CD4-positive, alpha-beta memory T cell (primary cell): ENCODE measurements at regions of chr1 and their contacts with region 1.

Region 1: DNA sequence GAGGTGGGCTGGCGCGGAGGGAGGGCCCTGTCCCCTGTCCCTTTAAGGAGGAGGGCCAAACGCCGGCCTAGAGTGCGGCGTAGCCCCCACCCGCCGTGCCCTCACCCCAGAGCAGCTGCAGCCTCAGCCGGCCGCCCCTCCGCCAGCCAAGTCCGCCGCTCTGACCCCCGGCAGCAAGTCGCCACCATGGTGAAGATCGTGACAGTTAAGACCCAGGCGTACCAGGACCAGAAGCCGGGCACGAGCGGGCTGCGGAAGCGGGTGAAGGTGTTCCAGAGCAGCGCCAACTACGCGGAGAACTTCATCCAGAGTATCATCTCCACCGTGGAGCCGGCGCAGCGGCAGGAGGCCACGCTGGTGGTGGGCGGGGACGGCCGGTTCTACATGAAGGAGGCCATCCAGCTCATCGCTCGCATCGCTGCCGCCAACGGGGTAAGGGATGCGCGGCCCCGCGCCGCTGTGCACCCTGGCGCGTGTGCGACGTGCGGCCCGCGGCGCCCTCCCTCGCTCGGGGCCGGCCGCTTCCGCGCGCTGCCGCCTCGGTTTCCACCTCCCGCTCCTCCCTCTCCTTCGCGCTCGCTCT is at the start of gene PGM1:
- DNase-seq: peak; percentile 78 to 83 (median 82)
- H3K4me3 ChIP-seq: peak within 1 kb of the TSS; percentile 48 to 94
- H3K4me3 Mint-ChIP-seq: peak within 1 kb of the TSS; percentile 95 to 99 (median 98)
- H3K27ac ChIP-seq: peak within 1 kb of the TSS; percentile 73
- H3K27ac Mint-ChIP-seq: peak within 1 kb of the TSS; percentile 96 to 100 (median 99)
- H3K4me1 ChIP-seq: peaks cover 10% of the 10 kb centered on the region
- H3K4me1 Mint-ChIP-seq: peaks cover 22 to 36% (median 28%) of the 10 kb centered on the region in 4 donors
- H3K27me3 ChIP-seq: no peaks in the 10 kb centered on the region
- H3K27me3 Mint-ChIP-seq: no peaks in the 10 kb centered on the region
- total RNA-seq, gene PGM1: 18.8 to 20.7 TPM

Region 2: DNA sequence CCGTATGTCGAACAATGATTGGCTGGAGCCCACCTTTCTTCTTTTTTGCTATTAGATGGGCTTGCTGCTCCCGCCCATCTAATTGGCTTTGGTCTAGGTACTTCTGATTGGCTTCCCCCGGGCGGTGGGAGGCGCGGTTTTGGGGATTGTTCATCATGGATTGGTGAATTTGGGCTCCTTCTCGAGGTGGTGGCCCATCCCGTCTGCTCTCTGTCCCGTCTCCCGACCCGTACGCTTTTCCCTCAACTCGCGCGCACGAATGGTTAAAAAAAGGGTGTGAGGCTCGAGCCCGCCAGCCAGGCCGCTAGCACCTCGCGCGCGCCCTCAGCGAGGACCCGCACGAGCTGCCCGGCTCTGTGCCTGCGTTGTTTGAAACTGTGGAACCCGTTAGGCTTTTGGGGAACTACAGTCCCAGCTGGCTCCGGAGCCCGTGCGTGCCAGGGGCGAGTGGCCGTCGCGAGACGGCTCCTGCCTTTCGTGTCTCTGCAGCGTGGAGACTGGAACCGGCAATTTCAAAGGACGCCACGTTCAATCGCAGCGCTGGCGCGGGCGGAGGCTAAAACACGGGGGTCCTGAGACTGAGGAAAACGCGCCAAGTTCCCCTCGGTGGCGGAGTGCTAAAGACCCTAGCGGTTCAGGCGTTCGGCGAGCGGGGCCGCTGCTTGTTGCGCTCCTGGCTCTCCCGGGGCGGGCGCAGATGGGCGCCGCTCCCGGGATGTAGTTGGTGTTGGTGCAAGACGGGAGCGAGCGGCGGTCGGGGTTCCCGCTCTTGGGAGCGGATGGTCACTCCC is 1156.7 kb before region 1 on chr1 and contains the start of gene USP1:
- CTCF ChIA-PET with region 1: no interaction called
- POLR2A ChIA-PET with region 1: interaction called, 6 read pairs
- intact Hi-C with region 1: loop called (anchors 2 kb)
- DNase-seq: peak in 4 of 5 donors; percentile 98 to 100 (median 99)
- H3K4me3 ChIP-seq: peak within 1 kb of the TSS; percentile 84 to 97
- H3K4me3 Mint-ChIP-seq: peak within 1 kb of the TSS; percentile 87 to 97 (median 96)
- H3K27ac ChIP-seq: peak within 1 kb of the TSS; percentile 97
- H3K27ac Mint-ChIP-seq: peak within 1 kb of the TSS; percentile 97 to 100 (median 99)
- H3K4me1 ChIP-seq: peaks cover 43% of the 10 kb centered on the region
- H3K4me1 Mint-ChIP-seq: peaks cover 24 to 57% (median 36%) of the 10 kb centered on the region in 4 donors
- H3K27me3 ChIP-seq: no peaks in the 10 kb centered on the region
- H3K27me3 Mint-ChIP-seq: peaks cover 0 to 2% of the 10 kb centered on the region in 2 donors
- total RNA-seq, gene USP1: 46.3 to 50.0 TPM

Region 3: GRCh38 chr1:62783723-62784508 is 809.5 kb before region 1 on chr1 and contains the start of gene ATG4C:
- CTCF ChIA-PET with region 1: no interaction called
- POLR2A ChIA-PET with region 1: no interaction called
- intact Hi-C with region 1: loop called (anchors 1 kb)
- DNase-seq: peak; percentile 95 to 97 (median 96)
- H3K4me3 ChIP-seq: peak within 1 kb of the TSS; percentile 94 to 100
- H3K4me3 Mint-ChIP-seq: no peak within 1 kb of the TSS
- H3K27ac ChIP-seq: peak within 1 kb of the TSS; percentile 85
- H3K27ac Mint-ChIP-seq: no peak within 1 kb of the TSS
- H3K4me1 ChIP-seq: peaks cover 14% of the 10 kb centered on the region
- H3K4me1 Mint-ChIP-seq: peaks cover 5 to 10% (median 7%) of the 10 kb centered on the region in 4 donors
- H3K27me3 ChIP-seq: no peaks in the 10 kb centered on the region
- H3K27me3 Mint-ChIP-seq: peaks cover 3 to 4% of the 10 kb centered on the region in 2 donors
- total RNA-seq, gene ATG4C: 11.7 to 15.2 TPM

Region 4: DNA sequence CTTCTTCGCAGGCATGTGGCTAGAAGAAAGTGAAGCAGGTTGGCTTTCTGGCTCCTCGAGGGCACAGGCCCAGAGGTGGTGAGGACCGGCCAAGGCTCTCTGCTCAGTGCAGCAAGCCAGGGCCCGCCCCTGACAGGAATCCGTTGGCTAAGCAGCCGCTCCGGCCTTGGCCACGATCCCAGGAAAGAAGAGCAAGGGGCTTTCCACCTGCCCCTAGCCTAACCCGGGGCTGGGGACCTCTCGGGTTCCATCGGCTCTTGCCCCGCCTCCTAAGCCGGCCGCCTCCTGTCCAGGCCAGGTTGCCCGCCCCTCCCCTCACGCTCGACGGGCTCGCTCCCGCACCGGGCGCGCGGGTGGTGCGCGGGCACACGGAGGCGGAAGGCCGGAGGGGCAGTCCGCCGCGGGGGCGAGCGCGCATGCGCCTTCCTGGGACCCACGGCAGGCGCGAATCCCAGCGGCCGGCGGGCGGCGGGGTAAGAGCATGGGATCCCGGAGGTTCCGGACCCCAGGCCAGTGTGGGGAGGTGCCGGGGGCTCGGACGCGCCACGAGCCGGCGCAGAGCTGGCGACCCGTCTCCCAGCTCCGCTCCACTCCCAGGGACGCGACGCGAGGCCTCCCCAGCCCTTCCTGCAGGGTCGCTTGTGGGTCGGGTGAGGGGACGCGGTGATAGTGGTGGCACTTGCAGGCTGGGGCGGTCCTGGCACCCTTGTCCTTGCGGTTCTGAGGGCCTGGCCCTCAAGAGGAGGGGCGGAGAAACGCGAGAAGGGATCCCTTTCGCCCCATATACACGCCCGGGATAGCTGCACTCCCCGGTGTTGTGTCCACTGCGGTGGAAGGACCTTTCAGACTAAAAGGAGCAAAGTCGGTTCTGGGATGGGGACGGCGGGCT is 225.9 kb before region 1 on chr1 and contains the start of gene ALG6:
- CTCF ChIA-PET with region 1: no interaction called
- POLR2A ChIA-PET with region 1: interaction called, 3 read pairs
- intact Hi-C with region 1: loop called (anchors 1 kb)
- DNase-seq: peak; percentile 79 to 92 (median 86)
- H3K4me3 ChIP-seq: peak within 1 kb of the TSS; percentile 67 to 80
- H3K4me3 Mint-ChIP-seq: peak within 1 kb of the TSS; percentile 93 to 98 (median 94)
- H3K27ac ChIP-seq: peak within 1 kb of the TSS; percentile 59
- H3K27ac Mint-ChIP-seq: peak within 1 kb of the TSS; percentile 67 to 92 (median 89)
- H3K4me1 ChIP-seq: peaks cover 21% of the 10 kb centered on the region
- H3K4me1 Mint-ChIP-seq: peaks cover 21 to 36% (median 29%) of the 10 kb centered on the region in 4 donors
- H3K27me3 ChIP-seq: no peaks in the 10 kb centered on the region
- H3K27me3 Mint-ChIP-seq: peaks cover 0 to 7% of the 10 kb centered on the region in 2 donors
- total RNA-seq, gene ALG6: 27.6 to 28.4 TPM

Region 5: GRCh38 chr1:63575340-63575826 is 18.0 kb before region 1 on chr1:
- CTCF ChIA-PET with region 1: interaction called, 15 read pairs
- POLR2A ChIA-PET with region 1: interaction called, 5 read pairs
- intact Hi-C with region 1: loop called (anchors 1 kb)
- DNase-seq: peak in 4 of 5 donors; percentile 11 to 40 (median 30)
- H3K4me3 ChIP-seq: no peak overlapping the region
- H3K4me3 Mint-ChIP-seq: no peak overlapping the region
- H3K27ac ChIP-seq: no peak overlapping the region
- H3K27ac Mint-ChIP-seq: no peak overlapping the region
- H3K4me1 ChIP-seq: no peaks in the 10 kb centered on the region
- H3K4me1 Mint-ChIP-seq: no peaks in the 10 kb centered on the region
- H3K27me3 ChIP-seq: no peaks in the 10 kb centered on the region
- H3K27me3 Mint-ChIP-seq: no peaks in the 10 kb centered on the region

Region 6: DNA sequence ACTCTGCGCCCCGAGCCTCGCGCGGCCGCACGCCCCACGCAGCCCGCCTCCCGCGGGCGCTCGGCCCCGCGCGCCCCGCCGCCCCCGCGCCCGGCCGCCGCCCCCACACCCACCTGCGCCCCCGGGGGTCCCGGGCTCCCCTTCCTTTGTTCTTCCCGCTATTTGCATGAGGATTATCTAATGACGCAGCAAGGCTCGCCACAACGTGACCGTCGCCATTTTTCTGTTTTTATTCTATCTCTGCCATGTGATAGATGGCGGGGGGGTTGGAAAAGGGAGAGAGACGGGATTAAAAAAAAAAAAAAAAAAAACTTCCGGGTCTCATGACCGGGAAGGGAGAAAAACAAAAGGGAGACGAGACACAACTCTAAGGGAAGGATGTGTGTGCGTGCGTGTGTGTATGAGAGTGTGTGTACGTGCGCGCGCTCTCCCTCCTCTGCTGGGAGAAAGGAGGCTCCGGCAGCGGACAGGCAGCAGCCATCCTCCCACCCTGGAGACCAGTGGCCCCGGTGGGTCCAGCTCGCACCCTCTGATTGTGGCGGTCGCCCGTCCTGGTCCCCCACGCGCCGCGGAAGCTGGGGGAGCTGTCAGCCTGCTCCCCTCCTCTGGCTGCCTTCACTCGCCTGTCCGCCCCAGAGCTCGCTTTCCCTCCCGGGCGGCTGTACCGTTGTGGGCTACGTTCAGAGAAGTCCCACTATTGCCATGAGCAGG is 1474.3 kb after region 1 on chr1:
- CTCF ChIA-PET with region 1: no interaction called
- POLR2A ChIA-PET with region 1: interaction called, 5 read pairs
- intact Hi-C with region 1: loop called (anchors 1 kb)
- DNase-seq: peak; percentile 66 to 72 (median 69)
- H3K4me3 ChIP-seq: peak overlapping the region; percentile 84 to 97
- H3K4me3 Mint-ChIP-seq: peak overlapping the region; percentile 92 to 98 (median 96)
- H3K27ac ChIP-seq: peak overlapping the region; percentile 87
- H3K27ac Mint-ChIP-seq: peak overlapping the region; percentile 95 to 99 (median 98)
- H3K4me1 ChIP-seq: peaks cover 50% of the 10 kb centered on the region
- H3K4me1 Mint-ChIP-seq: peaks cover 39 to 66% (median 49%) of the 10 kb centered on the region in 4 donors
- H3K27me3 ChIP-seq: no peaks in the 10 kb centered on the region
- H3K27me3 Mint-ChIP-seq: no peaks in the 10 kb centered on the region